T-cell (primary cell): ENCODE measurements at regions of chr5 and their contacts with region 1.

Region 1: DNA sequence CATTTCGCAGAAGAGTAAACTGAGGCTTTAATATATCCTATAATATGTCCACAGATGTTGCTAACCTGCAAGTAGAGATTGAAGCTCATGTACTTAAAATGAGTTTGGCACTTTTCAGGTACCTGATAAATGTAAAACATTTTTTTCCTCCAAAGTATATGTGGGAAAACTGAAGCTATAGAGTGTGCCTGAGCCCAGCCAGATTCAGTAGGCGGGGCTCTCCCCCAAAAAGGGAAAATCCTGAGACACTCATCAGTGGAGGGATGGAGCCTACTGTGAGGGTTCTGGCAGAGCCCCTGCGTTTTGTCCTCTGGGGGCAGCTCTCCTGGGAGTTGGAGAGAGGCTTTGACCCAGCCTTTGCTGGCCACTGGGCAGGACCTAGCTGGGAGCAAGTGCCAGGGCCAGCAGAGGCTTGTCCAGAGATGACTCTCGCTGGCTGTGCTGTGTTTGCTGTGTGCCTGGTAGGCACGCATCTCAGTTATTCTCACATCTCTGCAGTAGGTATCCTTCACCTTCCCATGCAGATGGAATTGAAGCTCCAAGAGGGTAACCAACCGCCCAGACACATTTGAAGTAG is 81.1 kb upstream of the SPRY4 start:
- DNase-seq: no peak
- ATAC-seq: no peak
- H3K4me3 ChIP-seq: no peak overlapping the region
- H3K4me3 Mint-ChIP-seq: no peak overlapping the region
- H3K27ac ChIP-seq: no peak overlapping the region
- H3K27ac Mint-ChIP-seq: no peak overlapping the region
- H3K4me1 ChIP-seq: no peaks in the 10 kb centered on the region
- H3K4me1 Mint-ChIP-seq: peaks cover 0 to 4% (median 0%) of the 10 kb centered on the region in 3 donors
- H3K27me3 ChIP-seq: peaks cover 0 to 11% of the 10 kb centered on the region in 2 experiments
- H3K27me3 Mint-ChIP-seq: peaks cover 0 to 1% of the 10 kb centered on the region in 2 donors

Region 2: DNA sequence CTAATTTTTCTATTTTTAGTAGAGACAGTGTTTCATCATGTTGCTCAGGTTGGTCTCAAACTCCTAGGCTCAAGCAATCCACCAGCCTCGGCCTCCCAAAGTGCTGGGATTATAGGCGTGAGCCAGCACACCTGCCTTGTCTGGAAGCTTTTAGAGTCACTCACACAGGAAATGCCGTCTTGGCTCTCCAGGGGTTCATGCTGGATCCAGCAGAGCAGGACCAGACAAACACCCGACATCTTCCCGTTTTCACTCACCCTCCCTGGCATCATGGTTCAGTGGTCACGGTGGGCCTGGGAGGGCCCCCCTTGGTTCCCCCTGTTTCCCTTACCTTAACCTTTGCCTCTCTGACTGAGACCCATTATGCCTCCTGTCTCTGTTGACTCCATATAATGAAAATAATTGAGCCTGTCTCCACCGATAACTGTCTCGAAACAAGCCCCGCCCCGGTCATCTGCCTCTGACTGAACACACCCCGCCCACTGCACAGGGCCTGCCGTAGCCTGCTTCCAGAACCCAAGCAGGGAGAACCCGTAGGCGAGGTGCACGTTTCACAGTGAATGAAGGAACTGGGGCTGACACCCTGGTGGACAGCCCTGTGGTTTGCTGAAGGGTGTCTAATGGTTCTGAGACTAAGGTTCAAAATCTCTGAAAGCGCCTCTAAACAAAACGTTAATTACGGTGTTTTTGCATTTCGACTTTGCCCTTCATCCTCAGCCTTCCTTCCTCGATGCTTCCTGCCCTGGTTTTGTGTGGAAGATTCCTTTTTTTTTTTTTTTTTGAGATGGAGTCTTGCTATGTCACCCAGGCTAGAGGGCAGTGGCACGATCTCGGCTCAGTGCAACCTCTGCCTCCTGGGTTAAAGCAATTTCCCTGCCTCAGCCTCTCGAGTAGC is 41.4 kb before region 1 on chr5:
- CTCF ChIA-PET with region 1: interaction called in 1 of 2 experiments, 10 read pairs
- POLR2A ChIA-PET with region 1: no interaction called
- DNase-seq: no peak
- ATAC-seq: no peak
- H3K4me3 ChIP-seq: no peak overlapping the region
- H3K4me3 Mint-ChIP-seq: no peak overlapping the region
- H3K27ac ChIP-seq: no peak overlapping the region
- H3K27ac Mint-ChIP-seq: no peak overlapping the region
- H3K4me1 ChIP-seq: peaks cover 2 to 4% of the 10 kb centered on the region in 2 experiments
- H3K4me1 Mint-ChIP-seq: peaks cover 19 to 26% (median 24%) of the 10 kb centered on the region in 3 donors
- H3K27me3 ChIP-seq: peaks cover 0 to 2% of the 10 kb centered on the region in 2 experiments
- H3K27me3 Mint-ChIP-seq: peaks cover 0 to 3% of the 10 kb centered on the region in 2 donors